Endothelial cell of umbilical vein (primary cell): ENCODE measurements at regions of chrX and their contacts with region 1.

Region 1: GRCh38 chrX:19904778-19905367 is 17.5 kb upstream of the SH3KBP1 start:
- DNase-seq: peak; percentile 24
- H3K4me3 ChIP-seq: no peak overlapping the region
- H3K27ac ChIP-seq: no peak overlapping the region
- H3K4me1 ChIP-seq: no peaks in the 10 kb centered on the region
- H3K27me3 ChIP-seq: no peaks in the 10 kb centered on the region
- CTCF ChIP-seq: peak; percentile 34 to 54
- POLR2A ChIP-seq: no peak

Region 2: DNA sequence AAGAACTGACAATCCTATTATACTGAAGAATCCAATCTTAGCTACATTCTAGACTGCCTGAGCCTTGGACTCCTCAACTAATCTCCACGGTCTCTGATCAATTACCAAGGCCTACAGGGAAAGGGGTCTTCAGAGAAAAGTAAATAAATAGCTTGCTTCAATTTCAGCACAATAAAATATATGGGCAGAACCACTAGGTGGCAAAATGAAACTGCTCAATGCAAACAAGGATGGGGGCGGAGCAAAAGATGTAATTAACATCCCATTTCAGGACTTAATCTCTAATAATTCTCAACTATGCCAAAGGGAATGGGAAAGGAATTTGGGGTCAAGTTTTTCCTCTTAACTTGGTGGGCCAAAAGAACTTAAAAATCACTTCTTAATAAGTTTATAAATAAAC is 311.2 kb before region 1 on chrX:
- CTCF ChIA-PET with region 1: interaction called, 24 read pairs
- POLR2A ChIA-PET with region 1: no interaction called
- dilution Hi-C with region 1: no loop called
- intact Hi-C with region 1: no loop called
- DNase-seq: peak; percentile 52
- H3K4me3 ChIP-seq: no peak overlapping the region
- H3K27ac ChIP-seq: no peak overlapping the region
- H3K4me1 ChIP-seq: no peaks in the 10 kb centered on the region
- H3K27me3 ChIP-seq: no peaks in the 10 kb centered on the region
- CTCF ChIP-seq: peak; percentile 22 to 27
- POLR2A ChIP-seq: no peak

Region 3: GRCh38 chrX:20066968-20067708 is 162.3 kb after region 1 on chrX:
- CTCF ChIA-PET with region 1: interaction called, 61 read pairs
- POLR2A ChIA-PET with region 1: no interaction called
- dilution Hi-C with region 1: no loop called
- intact Hi-C with region 1: loop called (anchors 1 kb)
- DNase-seq: peak; percentile 11
- H3K4me3 ChIP-seq: no peak overlapping the region
- H3K27ac ChIP-seq: no peak overlapping the region
- H3K4me1 ChIP-seq: peaks cover 4% of the 10 kb centered on the region
- H3K27me3 ChIP-seq: no peaks in the 10 kb centered on the region
- CTCF ChIP-seq: peak in 1 of 2 donors; percentile 15
- POLR2A ChIP-seq: no peak

Region 4: GRCh38 chrX:20132666-20133065 is 227.8 kb after region 1 on chrX:
- CTCF ChIA-PET with region 1: interaction called, 6 read pairs
- POLR2A ChIA-PET with region 1: no interaction called
- dilution Hi-C with region 1: no loop called
- intact Hi-C with region 1: loop called (anchors 5 kb)
- DNase-seq: no peak
- H3K4me3 ChIP-seq: no peak overlapping the region
- H3K27ac ChIP-seq: no peak overlapping the region
- H3K4me1 ChIP-seq: peaks cover 8% of the 10 kb centered on the region
- H3K27me3 ChIP-seq: no peaks in the 10 kb centered on the region
- CTCF ChIP-seq: no peak
- POLR2A ChIP-seq: no peak